Psoas muscle (tissue), 8 donors: ENCODE measurements at regions of chr10 and their contacts with region 1.

Region 1: GRCh38 chr10:35126530-35127296 is at the start of gene CREM:
- DNase-seq: peak; percentile 99 to 100
- ATAC-seq: peak; percentile 96 to 97 (median 96)
- H3K4me3 ChIP-seq: peak within 1 kb of the TSS; percentile 80
- H3K27ac ChIP-seq: peak within 1 kb of the TSS; percentile 98
- H3K4me1 ChIP-seq: peaks cover 10% of the 10 kb centered on the region
- H3K27me3 ChIP-seq: no peaks in the 10 kb centered on the region
- CTCF ChIP-seq: peak; percentile 80
- total RNA-seq, gene CREM: 18.8 to 61.0 (median 30.8) TPM

Region 2: GRCh38 chr10:34933676-34934075 is 193.0 kb before region 1 on chr10:
- intact Hi-C with region 1: no loop called
- DNase-seq: peak; percentile 28 to 78
- ATAC-seq: peak in 3 of 4 donors; percentile 60 to 76 (median 69)
- H3K4me3 ChIP-seq: no peak overlapping the region
- H3K27ac ChIP-seq: no peak overlapping the region
- H3K4me1 ChIP-seq: no peaks in the 10 kb centered on the region
- H3K27me3 ChIP-seq: no peaks in the 10 kb centered on the region
- CTCF ChIP-seq: no peak

Region 3: DNA sequence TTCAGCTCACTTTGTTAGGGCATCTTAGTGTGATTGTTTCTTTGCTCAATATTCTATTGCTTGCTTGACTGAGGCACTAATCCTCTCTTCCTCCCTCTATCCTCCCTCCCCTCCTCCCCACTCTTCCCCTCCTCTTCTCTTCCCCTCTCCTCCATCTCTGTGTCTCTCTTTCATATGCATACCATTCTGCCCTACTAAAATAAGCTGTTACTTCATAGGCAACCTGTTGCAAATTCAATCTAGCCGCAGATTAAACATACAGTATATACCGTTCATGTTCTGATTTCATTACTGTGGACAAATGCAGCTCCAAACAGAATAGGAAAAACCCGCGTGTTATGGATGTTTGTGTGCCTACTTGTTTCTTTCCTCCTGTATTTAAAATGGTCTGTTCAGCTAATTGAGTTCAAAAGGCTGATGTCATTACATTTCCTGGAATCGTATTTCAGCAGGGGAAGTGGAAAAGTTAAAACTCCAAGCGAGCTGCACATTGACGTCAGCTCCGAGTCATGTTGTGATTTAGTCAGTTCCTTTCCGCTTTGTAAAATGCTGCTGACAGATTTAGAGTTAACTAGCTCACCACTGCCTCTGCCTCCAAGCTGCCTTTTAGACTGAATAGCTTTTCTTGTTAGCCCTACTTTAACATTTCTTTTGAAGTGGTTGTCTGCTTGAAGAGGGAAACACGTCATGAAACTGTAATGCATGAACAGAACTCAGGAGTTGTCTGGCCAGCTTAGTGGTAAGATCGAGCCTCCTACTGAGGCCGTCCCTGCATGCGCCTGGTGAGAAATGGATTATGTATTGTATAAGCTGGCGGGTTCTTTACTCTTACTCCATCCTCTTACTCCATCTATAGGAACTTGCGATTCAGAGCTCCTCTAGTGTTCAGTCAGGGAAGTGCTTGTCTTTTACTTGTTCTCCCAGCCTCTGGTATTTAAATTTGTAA is 68.9 kb after region 1 on chr10:
- intact Hi-C with region 1: loop called (anchors 1 to 5 kb)
- DNase-seq: peak in 1 of 2 donors; percentile 48
- ATAC-seq: peak; percentile 84 to 91 (median 90)
- H3K4me3 ChIP-seq: peak overlapping the region; percentile 63
- H3K27ac ChIP-seq: peak overlapping the region; percentile 87
- H3K4me1 ChIP-seq: peaks cover 8% of the 10 kb centered on the region
- H3K27me3 ChIP-seq: no peaks in the 10 kb centered on the region
- CTCF ChIP-seq: peak; percentile 89

Region 4: DNA sequence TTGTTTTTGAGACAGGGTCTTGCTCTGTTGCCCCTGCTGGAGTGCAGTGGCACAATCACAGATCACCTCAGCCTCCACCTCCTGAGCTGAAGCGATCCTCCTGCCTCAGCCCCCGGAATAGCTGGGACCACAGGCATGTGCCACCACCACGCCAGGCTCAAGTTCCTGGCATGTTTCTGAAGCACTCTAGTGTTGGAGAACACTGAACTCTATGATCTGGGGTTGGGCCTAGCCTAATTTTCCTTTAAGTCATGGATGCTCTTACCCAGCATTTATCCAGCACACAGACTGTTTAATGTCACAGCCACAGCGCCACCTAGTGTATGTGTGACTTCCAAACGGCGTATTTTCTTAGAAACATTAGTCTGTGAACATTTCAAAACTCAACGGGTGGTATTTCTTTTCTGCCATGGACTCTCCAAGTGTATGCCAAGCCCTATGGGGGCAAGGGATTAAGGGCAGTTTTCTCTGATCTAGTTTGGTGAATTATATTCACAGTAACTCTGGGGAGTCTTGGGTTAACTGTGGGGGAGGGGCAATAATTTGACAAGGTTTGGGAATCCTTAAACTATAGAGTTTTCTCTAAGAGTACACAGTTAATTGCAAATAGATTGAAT is 91.7 kb after region 1 on chr10:
- intact Hi-C with region 1: loop called in 1 of 2 experiments (anchors 2 kb)
- DNase-seq: peak; percentile 78 to 85
- ATAC-seq: peak; percentile 74 to 85 (median 78)
- H3K4me3 ChIP-seq: peak overlapping the region; percentile 8
- H3K27ac ChIP-seq: peak overlapping the region; percentile 60
- H3K4me1 ChIP-seq: peaks cover 34% of the 10 kb centered on the region
- H3K27me3 ChIP-seq: no peaks in the 10 kb centered on the region
- CTCF ChIP-seq: peak; percentile 83

Region 5: GRCh38 chr10:35563261-35563891 is 436.7 kb after region 1 on chr10:
- intact Hi-C with region 1: loop called in 1 of 2 experiments (anchors 10 kb)
- DNase-seq: peak; percentile 50 to 66
- ATAC-seq: peak; percentile 36 to 72 (median 56)
- H3K4me3 ChIP-seq: no peak overlapping the region
- H3K27ac ChIP-seq: no peak overlapping the region
- H3K4me1 ChIP-seq: peaks cover 41% of the 10 kb centered on the region
- H3K27me3 ChIP-seq: no peaks in the 10 kb centered on the region
- CTCF ChIP-seq: peak; percentile 92